Activated CD8-positive, alpha-beta memory T cell treated with anti-CD3 and anti-CD28 coated beads, Interleukin-2, amount 10 ng/mL, durations not matched to agents 7 days and 5 days (primary cell): ENCODE measurements at regions of chr17 and their contacts with region 1.

Region 1: GRCh38 chr17:48618256-48618897 is 3.3 kb upstream of the HOXB8 start:
- DNase-seq: peak; percentile 86
- ATAC-seq: peak; percentile 76
- H3K4me3 Mint-ChIP-seq: peak overlapping the region; percentile 31
- H3K27ac Mint-ChIP-seq: peak overlapping the region; percentile 36
- H3K4me1 Mint-ChIP-seq: peaks cover 34% of the 10 kb centered on the region
- H3K27me3 Mint-ChIP-seq: peaks cover 96% of the 10 kb centered on the region

Region 2: DNA sequence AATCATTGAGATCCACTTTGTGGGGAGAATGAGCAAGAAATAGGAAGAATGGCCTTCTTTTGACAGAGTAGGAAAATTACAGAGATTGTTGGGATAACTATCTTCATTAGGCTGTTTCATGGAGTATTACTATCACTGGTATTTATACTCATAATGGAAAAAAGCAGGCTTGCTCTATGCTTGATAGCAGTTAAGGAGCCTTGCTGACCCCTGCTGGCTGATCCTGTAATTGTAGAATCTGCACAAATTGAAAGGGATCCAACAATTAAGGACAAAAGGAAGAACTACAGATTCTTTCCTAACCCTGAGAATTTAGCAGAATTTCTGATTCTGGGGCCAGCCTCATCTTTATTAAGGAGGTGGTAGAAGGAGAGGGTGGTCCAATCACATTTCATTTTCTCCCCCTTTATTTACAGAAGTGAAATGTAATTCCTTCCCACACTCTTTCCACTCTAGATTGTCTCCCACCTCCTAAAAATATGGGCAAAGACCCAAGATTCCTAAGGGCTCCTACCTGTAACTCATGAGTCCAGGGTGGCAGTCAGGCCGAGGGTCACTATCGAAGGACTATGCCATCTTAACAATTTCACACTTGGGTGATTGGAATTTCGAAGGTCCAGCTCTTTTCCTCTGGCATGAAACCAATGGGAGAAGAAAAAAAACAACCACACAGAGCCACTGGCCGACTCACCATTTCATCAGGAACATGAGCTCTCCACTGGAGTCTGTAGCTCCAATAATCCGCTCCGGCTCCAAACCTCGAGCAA is 543.9 kb before region 1 on chr17:
- CTCF ChIA-PET with region 1: interaction called, 10 read pairs
- DNase-seq: peak; percentile 83
- ATAC-seq: peak; percentile 84
- H3K4me3 Mint-ChIP-seq: no peak overlapping the region
- H3K27ac Mint-ChIP-seq: no peak overlapping the region
- H3K4me1 Mint-ChIP-seq: no peaks in the 10 kb centered on the region
- H3K27me3 Mint-ChIP-seq: no peaks in the 10 kb centered on the region

Region 3: GRCh38 chr17:48586355-48587258 is 31.8 kb before region 1 on chr17:
- CTCF ChIA-PET with region 1: no interaction called
- DNase-seq: peak; percentile 56
- ATAC-seq: no peak
- H3K4me3 Mint-ChIP-seq: peak overlapping the region; percentile 80
- H3K27ac Mint-ChIP-seq: peak overlapping the region; percentile 82
- H3K4me1 Mint-ChIP-seq: peaks cover 42% of the 10 kb centered on the region
- H3K27me3 Mint-ChIP-seq: peaks cover 74% of the 10 kb centered on the region

Region 4: DNA sequence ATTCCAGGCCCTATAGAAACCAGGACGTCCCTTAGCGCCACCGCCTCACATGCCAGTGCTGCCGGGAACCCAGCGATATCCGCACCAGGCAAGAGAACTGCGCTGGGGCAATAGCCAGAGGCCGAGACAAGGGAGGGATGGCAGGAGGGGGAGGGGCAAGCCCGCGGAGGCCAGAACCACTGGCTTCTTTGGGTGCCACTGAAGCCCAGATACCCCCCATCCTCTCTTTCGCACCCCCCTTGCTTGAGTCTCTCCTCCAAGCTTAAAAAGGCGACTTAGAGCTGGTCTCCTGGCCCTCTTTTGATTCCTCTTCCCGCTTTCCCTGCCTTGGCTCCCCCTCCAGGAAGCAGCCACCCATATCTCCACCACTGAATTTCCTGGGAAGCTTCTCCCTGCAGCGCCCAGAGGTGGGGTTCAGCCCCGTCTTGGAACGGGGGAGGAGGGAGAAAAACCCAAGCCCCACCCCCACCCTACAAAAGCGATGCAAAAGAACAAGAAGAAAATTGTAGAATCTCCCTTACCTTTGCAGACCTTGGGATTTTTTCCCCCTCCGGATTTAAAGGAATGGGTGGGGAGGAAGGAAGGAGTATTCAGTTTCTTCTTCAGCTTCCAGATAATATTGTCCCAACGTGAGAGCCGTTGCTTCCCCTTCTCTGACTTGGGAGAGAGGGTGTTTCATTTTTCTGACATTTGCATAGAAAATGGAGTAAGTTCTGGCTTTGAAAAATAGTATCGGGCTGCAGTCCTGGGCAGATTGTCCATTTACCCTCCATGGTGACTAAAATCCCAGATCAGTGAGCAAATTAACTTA is 14.2 kb before region 1 on chr17:
- CTCF ChIA-PET with region 1: no interaction called
- DNase-seq: no peak
- ATAC-seq: no peak
- H3K4me3 Mint-ChIP-seq: peak overlapping the region; percentile 22
- H3K27ac Mint-ChIP-seq: no peak overlapping the region
- H3K4me1 Mint-ChIP-seq: peaks cover 37% of the 10 kb centered on the region
- H3K27me3 Mint-ChIP-seq: peaks cover 95% of the 10 kb centered on the region

Region 5: DNA sequence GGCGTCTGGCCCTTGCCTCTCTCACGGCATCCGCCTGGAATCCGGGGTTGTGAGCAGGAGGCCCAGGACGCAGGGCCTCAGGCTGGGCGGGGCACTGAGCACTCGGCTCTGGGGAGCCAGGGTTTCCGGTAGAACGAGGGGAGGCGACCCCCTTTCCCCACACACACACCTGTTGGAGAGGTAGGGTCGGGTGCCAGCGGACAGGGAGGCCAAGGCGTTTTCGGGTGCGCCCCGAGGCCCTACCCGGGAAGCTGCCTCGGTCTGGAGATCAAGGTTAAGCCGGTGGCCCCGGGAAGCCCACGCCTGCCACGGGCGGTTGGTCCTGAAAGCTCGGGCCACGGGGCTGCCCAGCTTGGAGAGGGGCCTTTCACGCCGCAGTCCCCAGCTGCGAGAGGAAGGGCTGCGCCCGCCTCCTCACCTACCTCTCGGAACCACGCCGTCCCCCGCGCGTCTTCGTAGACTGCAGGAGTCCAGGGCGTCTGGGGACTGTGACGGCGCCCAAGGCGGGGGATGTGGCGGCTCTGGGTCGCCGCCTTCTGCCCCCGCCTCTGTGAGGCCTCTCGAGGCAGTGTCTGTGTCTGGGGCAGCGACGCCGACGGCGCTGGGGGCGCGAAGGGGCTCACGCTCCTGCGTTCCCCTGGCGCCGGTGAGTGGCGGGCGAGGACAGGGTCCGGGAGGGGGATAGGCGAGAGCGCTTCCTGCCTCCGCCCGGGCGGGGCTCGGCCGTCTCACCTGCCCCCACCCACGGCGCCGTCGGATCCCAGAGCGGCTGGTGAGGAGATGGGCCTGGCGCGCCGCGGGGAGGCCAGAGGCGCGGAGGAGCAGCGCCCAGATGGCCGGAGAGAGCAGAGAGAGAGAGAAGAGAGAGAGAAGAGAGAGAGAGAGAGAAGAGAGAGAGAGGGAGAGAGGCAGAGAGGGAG is 28.1 kb after region 1 on chr17:
- CTCF ChIA-PET with region 1: interaction called, 190 read pairs
- DNase-seq: peak; percentile 69
- ATAC-seq: peak; percentile 80
- H3K4me3 Mint-ChIP-seq: peak overlapping the region; percentile 89
- H3K27ac Mint-ChIP-seq: peak overlapping the region; percentile 87
- H3K4me1 Mint-ChIP-seq: peaks cover 55% of the 10 kb centered on the region
- H3K27me3 Mint-ChIP-seq: peaks cover 62% of the 10 kb centered on the region